ENCODE measurements at regions of chr10 and their contacts with region 1.

Region 1: GRCh38 chr10:124388823-124389612 is 29.7 kb downstream of the OAT start:
- DNase-seq: peak; percentile 92
- ATAC-seq: peak; percentile 98
- H3K4me3 Mint-ChIP-seq: peak overlapping the region; percentile 31
- H3K27ac Mint-ChIP-seq: no peak overlapping the region
- H3K4me1 Mint-ChIP-seq: peaks cover 2% of the 10 kb centered on the region
- H3K27me3 Mint-ChIP-seq: peaks cover 5% of the 10 kb centered on the region

Region 2: GRCh38 chr10:123994417-123995081 is 394.5 kb before region 1 on chr10:
- CTCF ChIA-PET with region 1: interaction called, 155 read pairs
- POLR2A ChIA-PET with region 1: no interaction called
- DNase-seq: peak; percentile 81
- ATAC-seq: peak; percentile 84
- H3K4me3 Mint-ChIP-seq: no peak overlapping the region
- H3K27ac Mint-ChIP-seq: no peak overlapping the region
- H3K4me1 Mint-ChIP-seq: peaks cover 8% of the 10 kb centered on the region
- H3K27me3 Mint-ChIP-seq: peaks cover 42% of the 10 kb centered on the region

Region 3: DNA sequence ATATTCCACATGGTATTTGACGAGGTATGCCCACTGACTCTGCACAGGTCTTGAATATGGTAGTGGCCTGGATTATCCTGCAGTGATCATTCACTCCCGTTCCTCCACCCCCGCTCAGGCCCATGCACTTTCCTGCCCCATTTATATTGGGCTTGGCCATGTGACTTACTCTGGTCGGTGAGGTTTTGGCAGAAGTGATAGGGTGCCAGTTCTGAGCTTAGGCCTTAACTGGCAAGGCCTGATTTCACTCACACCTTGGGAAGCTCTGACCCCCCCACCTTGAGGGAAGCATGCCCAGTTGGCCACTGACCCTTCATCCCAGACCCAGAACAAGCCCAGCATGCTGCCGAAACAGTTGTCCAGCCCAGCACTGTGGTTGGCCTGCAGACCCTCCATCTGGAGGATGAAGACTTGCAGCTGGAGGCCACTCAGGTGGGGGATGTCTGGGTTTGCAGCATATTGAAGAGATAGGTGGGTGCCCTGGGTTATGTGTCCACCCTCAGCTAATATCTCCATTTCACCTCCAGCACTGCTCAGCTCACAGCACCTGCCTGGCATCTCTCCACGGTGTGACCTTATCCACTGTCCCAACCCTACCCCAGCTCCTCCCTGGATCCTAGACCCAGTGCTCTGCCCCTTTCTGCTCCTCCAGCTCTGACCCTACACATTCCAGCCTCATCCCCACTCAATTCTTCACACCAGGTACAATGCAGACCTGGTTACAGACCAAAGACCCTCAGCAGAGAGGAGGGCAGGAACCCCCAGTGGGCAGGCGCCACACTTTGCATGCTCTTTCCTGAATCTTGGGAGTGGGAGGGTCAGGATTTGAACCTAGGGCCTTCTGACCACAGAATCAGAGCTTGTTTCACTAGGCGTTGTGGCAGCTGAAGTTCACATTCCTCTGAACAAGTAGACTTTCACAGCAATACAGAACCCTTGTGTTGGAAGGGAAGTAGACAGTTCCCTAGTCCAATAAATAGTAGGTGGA is 157.6 kb before region 1 on chr10:
- CTCF ChIA-PET with region 1: interaction called, 11 read pairs
- POLR2A ChIA-PET with region 1: no interaction called
- DNase-seq: peak; percentile 83
- ATAC-seq: peak; percentile 76
- H3K4me3 Mint-ChIP-seq: peak overlapping the region; percentile 22
- H3K27ac Mint-ChIP-seq: peak overlapping the region; percentile 73
- H3K4me1 Mint-ChIP-seq: no peaks in the 10 kb centered on the region
- H3K27me3 Mint-ChIP-seq: no peaks in the 10 kb centered on the region

Region 4: GRCh38 chr10:124336186-124336585 is 52.8 kb before region 1 on chr10:
- CTCF ChIA-PET with region 1: no interaction called
- POLR2A ChIA-PET with region 1: no interaction called
- DNase-seq: no peak
- ATAC-seq: no peak
- H3K4me3 Mint-ChIP-seq: no peak overlapping the region
- H3K27ac Mint-ChIP-seq: no peak overlapping the region
- H3K4me1 Mint-ChIP-seq: peaks cover 6% of the 10 kb centered on the region
- H3K27me3 Mint-ChIP-seq: peaks cover 11% of the 10 kb centered on the region

Region 5: DNA sequence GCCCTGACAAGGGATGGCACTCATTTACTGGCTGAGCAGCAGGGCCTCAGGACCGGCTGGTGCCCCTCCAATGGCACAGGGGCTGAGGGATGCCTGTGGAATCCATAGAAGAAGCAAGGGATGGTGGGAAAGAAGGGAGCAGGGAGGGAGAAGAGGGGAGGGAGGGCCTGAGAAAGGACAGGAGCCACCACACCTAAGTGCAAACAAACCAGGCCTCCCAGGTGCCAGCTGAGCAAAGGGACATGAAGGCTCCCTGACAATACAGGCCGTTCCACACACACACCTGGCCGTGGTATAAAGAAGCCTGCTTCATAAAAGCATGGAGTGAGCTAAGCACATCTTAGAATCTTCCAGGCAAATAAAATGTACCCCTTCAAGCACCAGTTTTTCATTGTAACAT is 24.4 kb before region 1 on chr10:
- CTCF ChIA-PET with region 1: interaction called, 14 read pairs
- POLR2A ChIA-PET with region 1: no interaction called
- DNase-seq: no peak
- ATAC-seq: no peak
- H3K4me3 Mint-ChIP-seq: no peak overlapping the region
- H3K27ac Mint-ChIP-seq: no peak overlapping the region
- H3K4me1 Mint-ChIP-seq: peaks cover 7% of the 10 kb centered on the region
- H3K27me3 Mint-ChIP-seq: peaks cover 3% of the 10 kb centered on the region

Region 6: GRCh38 chr10:124417895-124418725 is 29.1 kb after region 1 on chr10:
- CTCF ChIA-PET with region 1: interaction called, 12 read pairs
- POLR2A ChIA-PET with region 1: no interaction called
- DNase-seq: peak; percentile 61
- ATAC-seq: peak; percentile 58
- H3K4me3 Mint-ChIP-seq: peak overlapping the region; percentile 76
- H3K27ac Mint-ChIP-seq: peak overlapping the region; percentile 39
- H3K4me1 Mint-ChIP-seq: peaks cover 11% of the 10 kb centered on the region
- H3K27me3 Mint-ChIP-seq: peaks cover 10% of the 10 kb centered on the region

Measured in activated CD8-positive, alpha-beta T cell treated with anti-CD3 and anti-CD28 coated beads, Interleukin-2, amount 10 ng/mL, durations not matched to agents 7 days and 5 days (primary cell).